ENCODE measurements at regions of chrX and their contacts with region 1.

Region 1: GRCh38 chrX:103533511-103534216 is 14.4 kb upstream of the RAB40A start:
- DNase-seq: peak; percentile 23
- CTCF ChIP-seq: peak; percentile 87

Region 2: GRCh38 chrX:103073445-103073844 is 460.2 kb before region 1 on chrX:
- in situ Hi-C with region 1: no loop called
- DNase-seq: no peak
- CTCF ChIP-seq: no peak

Region 3: GRCh38 chrX:103629318-103630170 is 95.9 kb after region 1 on chrX:
- in situ Hi-C with region 1: loop called (anchors 25 kb)
- DNase-seq: peak; percentile 21
- CTCF ChIP-seq: peak; percentile 49

Region 4: DNA sequence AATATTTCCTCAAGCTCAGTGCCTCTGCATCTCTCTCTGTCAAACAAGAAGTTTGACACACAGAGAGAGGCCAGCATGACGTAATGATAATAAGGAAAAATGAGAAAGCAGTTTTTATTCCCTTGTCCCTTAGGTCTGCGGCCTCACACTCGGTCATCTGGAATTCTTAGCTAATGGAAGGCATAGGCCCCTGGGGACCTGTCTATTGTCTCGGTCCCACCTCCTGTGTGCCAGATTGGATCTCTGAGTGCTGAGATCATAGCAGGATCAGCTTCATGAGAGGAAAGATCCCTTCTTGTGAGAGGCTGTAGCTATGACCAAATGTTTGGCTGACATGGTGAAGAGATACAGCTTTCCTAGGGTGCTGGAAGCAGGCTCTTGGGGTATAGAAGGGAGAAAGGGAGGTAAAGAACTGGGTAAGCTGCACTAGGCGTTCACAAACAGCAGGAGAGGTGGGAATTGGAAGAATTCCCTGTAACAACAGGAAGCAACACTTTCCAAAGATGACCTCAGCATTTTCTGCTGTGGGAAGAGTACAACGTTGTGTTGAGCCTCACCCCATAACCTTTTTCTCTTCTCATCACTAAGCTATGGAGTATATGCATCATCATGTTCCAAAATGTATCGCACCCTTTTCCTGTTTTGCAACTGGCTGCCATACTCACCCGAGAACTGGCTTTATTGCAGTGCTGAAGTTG is 197.3 kb after region 1 on chrX:
- in situ Hi-C with region 1: no loop called
- DNase-seq: no peak
- CTCF ChIP-seq: no peak

Region 5: GRCh38 chrX:103817502-103817901 is 283.8 kb after region 1 on chrX:
- in situ Hi-C with region 1: loop called (anchors 25 kb)
- DNase-seq: peak; percentile 32
- CTCF ChIP-seq: peak; percentile 64